ENCODE measurements at regions of chr3 and their contacts with region 1.

Region 1: GRCh38 chr3:105827959-105828358 is 40.9 kb downstream of the CBLB start:
- DNase-seq: peak; percentile 36
- ATAC-seq: no peak
- H3K4me3 Mint-ChIP-seq: peak overlapping the region; percentile 57
- H3K27ac Mint-ChIP-seq: peak overlapping the region; percentile 100
- H3K4me1 Mint-ChIP-seq: peaks cover 88% of the 10 kb centered on the region
- H3K27me3 Mint-ChIP-seq: no peaks in the 10 kb centered on the region

Region 2: DNA sequence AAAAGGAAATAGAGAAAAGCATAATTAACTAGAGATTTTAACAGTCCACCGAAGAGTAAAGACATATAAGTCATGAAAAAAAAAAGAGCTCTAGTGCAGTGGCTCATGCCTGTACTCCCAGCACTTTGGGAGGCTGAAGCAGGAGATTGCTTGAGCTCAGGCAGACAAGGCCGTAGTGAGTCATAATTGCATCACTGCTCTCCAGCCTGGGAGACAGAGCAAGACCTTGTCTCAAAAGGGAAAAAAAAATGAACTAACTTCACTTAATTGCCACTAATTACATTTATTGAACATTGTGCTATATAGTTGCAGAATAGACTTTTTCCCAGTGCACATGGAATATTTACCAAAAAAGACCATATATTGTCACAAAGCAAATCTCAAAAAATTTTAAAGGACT is 180.9 kb before region 1 on chr3:
- CTCF ChIA-PET with region 1: no interaction called
- POLR2A ChIA-PET with region 1: no interaction called
- intact Hi-C with region 1: no loop called
- DNase-seq: no peak
- ATAC-seq: peak; percentile 49
- H3K4me3 Mint-ChIP-seq: no peak overlapping the region
- H3K27ac Mint-ChIP-seq: no peak overlapping the region
- H3K4me1 Mint-ChIP-seq: no peaks in the 10 kb centered on the region
- H3K27me3 Mint-ChIP-seq: no peaks in the 10 kb centered on the region

Region 3: DNA sequence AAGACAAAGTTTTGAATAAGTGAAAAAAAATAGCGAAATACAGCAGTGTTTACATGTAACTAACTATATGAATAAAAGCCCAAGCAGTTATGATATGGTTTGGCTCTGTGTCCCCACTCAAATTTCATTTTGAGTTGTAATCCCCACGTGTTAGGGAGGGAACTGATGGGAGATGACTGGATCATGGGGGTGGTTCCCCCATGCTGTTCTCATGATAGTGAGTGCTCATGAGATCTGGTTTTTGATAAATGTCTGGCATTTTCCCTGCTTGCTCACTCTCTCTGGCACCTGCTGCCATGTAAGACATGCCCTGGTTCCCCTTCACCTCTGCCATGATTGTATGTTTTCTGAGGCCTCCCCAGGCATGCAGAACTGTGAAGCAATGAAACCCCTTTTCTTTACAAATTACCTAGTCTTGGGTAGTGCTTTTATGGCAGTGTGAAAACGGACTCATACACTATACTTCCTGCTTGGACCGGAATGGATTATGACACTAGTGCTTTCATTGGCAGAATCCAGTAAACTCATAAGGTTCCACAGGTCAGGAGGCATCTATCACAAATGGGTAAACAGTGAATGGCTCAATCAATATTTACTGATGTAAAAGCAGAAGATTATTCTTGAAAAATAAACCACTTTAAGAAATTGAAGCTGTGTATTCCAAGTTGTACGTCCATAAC is 151.2 kb before region 1 on chr3:
- CTCF ChIA-PET with region 1: no interaction called
- POLR2A ChIA-PET with region 1: no interaction called
- intact Hi-C with region 1: loop called in 1 of 2 experiments (anchors 1 kb)
- DNase-seq: peak; percentile 74
- ATAC-seq: peak; percentile 94
- H3K4me3 Mint-ChIP-seq: peak overlapping the region; percentile 27
- H3K27ac Mint-ChIP-seq: peak overlapping the region; percentile 87
- H3K4me1 Mint-ChIP-seq: peaks cover 27% of the 10 kb centered on the region
- H3K27me3 Mint-ChIP-seq: no peaks in the 10 kb centered on the region

Region 4: DNA sequence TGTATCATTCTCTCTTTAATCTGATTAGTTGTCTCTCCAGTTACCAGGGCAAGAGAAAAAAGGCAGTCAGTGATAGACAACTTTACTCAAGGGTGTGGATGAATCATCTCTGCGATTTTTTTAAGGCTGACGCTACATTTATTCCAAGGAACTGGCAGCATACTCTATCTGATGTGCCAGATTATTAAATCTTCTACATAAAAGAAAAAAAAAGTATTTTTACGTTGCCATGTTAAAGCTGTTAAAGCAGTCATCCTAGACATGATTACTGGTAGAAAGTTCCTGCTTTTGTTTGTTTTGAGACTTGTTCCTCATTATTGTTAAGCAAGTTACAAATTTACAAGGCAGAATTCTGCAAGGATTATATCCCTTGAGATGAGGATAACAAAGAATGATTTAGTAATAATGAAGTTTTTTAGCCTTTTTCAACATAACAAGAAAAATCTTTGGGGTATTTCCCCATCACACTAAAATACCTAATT is 80.9 kb before region 1 on chr3:
- CTCF ChIA-PET with region 1: interaction called, 3 read pairs
- POLR2A ChIA-PET with region 1: interaction called, 3 read pairs
- intact Hi-C with region 1: loop called (anchors 2 kb)
- DNase-seq: no peak
- ATAC-seq: peak; percentile 88
- H3K4me3 Mint-ChIP-seq: peak overlapping the region; percentile 50
- H3K27ac Mint-ChIP-seq: peak overlapping the region; percentile 91
- H3K4me1 Mint-ChIP-seq: peaks cover 69% of the 10 kb centered on the region
- H3K27me3 Mint-ChIP-seq: no peaks in the 10 kb centered on the region

Region 5: GRCh38 chr3:105774444-105775180 is 53.3 kb before region 1 on chr3:
- CTCF ChIA-PET with region 1: interaction called, 4 read pairs
- POLR2A ChIA-PET with region 1: interaction called, 4 read pairs
- intact Hi-C with region 1: loop called in 1 of 2 experiments (anchors 1 kb)
- DNase-seq: no peak
- ATAC-seq: peak; percentile 72
- H3K4me3 Mint-ChIP-seq: peak overlapping the region; percentile 12
- H3K27ac Mint-ChIP-seq: peak overlapping the region; percentile 78
- H3K4me1 Mint-ChIP-seq: peaks cover 81% of the 10 kb centered on the region
- H3K27me3 Mint-ChIP-seq: no peaks in the 10 kb centered on the region

Region 6: GRCh38 chr3:106013971-106014370 is 186.0 kb after region 1 on chr3:
- CTCF ChIA-PET with region 1: no interaction called
- POLR2A ChIA-PET with region 1: no interaction called
- intact Hi-C with region 1: loop called (anchors 5 kb)
- DNase-seq: peak; percentile 19
- ATAC-seq: peak; percentile 72
- H3K4me3 Mint-ChIP-seq: no peak overlapping the region
- H3K27ac Mint-ChIP-seq: peak overlapping the region; percentile 68
- H3K4me1 Mint-ChIP-seq: peaks cover 50% of the 10 kb centered on the region
- H3K27me3 Mint-ChIP-seq: no peaks in the 10 kb centered on the region

Region 7: GRCh38 chr3:106215047-106215446 is 387.1 kb after region 1 on chr3:
- CTCF ChIA-PET with region 1: no interaction called
- POLR2A ChIA-PET with region 1: no interaction called
- intact Hi-C with region 1: loop called in 1 of 2 experiments (anchors 2 kb)
- DNase-seq: peak; percentile 62
- ATAC-seq: peak; percentile 91
- H3K4me3 Mint-ChIP-seq: no peak overlapping the region
- H3K27ac Mint-ChIP-seq: peak overlapping the region; percentile 73
- H3K4me1 Mint-ChIP-seq: peaks cover 59% of the 10 kb centered on the region
- H3K27me3 Mint-ChIP-seq: no peaks in the 10 kb centered on the region

Region 8: GRCh38 chr3:106317141-106318055 is 489.4 kb after region 1 on chr3:
- CTCF ChIA-PET with region 1: no interaction called
- POLR2A ChIA-PET with region 1: no interaction called
- intact Hi-C with region 1: no loop called
- DNase-seq: no peak
- ATAC-seq: no peak
- H3K4me3 Mint-ChIP-seq: no peak overlapping the region
- H3K27ac Mint-ChIP-seq: no peak overlapping the region
- H3K4me1 Mint-ChIP-seq: peaks cover 22% of the 10 kb centered on the region
- H3K27me3 Mint-ChIP-seq: no peaks in the 10 kb centered on the region

Region 9: GRCh38 chr3:106428565-106428994 is 600.6 kb after region 1 on chr3:
- CTCF ChIA-PET with region 1: no interaction called
- POLR2A ChIA-PET with region 1: interaction called, 6 read pairs
- intact Hi-C with region 1: loop called (anchors 1 to 2 kb)
- DNase-seq: peak; percentile 73
- ATAC-seq: peak; percentile 82
- H3K4me3 Mint-ChIP-seq: no peak overlapping the region
- H3K27ac Mint-ChIP-seq: peak overlapping the region; percentile 98
- H3K4me1 Mint-ChIP-seq: peaks cover 49% of the 10 kb centered on the region
- H3K27me3 Mint-ChIP-seq: no peaks in the 10 kb centered on the region

Measured in activated CD4-positive, alpha-beta T cell treated with anti-CD3 and anti-CD28 coated beads for 36 hours (primary cell).